Colonic mucosa (tissue), 4 donors: ENCODE measurements at regions of chr10 and their contacts with region 1.

Region 1: DNA sequence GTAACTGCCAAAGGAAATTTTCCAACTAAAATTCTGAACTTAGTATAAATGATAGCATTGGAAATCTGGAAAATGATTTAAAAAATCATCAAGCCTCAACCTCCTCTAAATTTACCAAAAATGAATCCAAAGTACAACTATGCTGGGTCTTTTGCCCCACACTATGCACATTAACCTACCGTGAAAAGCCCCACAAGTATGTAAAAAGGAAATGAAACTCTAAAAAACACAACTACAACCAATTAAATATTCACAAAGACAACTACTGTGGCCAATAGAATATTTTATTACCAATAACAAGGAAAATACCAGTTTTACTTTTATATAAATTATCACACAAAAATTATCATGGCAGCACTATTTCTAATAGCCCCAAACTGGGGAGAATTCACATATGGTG is 19.3 kb downstream of the EIF3A start:
- DNase-seq: no peak
- H3K4me3 ChIP-seq: no peak overlapping the region
- H3K27ac ChIP-seq: no peak overlapping the region
- H3K4me1 ChIP-seq: no peaks in the 10 kb centered on the region
- H3K27me3 ChIP-seq: no peaks in the 10 kb centered on the region
- CTCF ChIP-seq: no peak

Region 2: DNA sequence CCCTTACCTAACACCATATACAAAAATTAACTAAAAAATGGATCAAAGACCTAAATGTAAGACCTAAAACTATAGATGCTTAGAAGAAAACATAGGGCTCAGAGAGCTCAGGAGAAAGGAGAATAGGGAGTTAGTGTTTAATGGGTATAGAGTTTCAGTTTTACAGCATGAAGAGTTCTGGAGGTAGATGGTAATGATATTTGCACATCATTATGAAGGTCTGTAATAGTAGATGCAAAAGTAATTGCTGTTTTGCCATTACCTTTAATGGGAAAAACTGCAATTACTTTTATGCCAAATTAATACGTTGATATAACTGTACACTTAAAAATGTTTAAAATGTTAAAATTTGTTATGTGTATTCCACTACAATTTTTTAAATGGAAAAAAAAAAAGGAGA is 71.0 kb before region 1 on chr10:
- intact Hi-C with region 1: no loop called
- DNase-seq: no peak
- H3K4me3 ChIP-seq: no peak overlapping the region
- H3K27ac ChIP-seq: no peak overlapping the region
- H3K4me1 ChIP-seq: no peaks in the 10 kb centered on the region
- H3K27me3 ChIP-seq: no peaks in the 10 kb centered on the region
- CTCF ChIP-seq: no peak

Region 3: DNA sequence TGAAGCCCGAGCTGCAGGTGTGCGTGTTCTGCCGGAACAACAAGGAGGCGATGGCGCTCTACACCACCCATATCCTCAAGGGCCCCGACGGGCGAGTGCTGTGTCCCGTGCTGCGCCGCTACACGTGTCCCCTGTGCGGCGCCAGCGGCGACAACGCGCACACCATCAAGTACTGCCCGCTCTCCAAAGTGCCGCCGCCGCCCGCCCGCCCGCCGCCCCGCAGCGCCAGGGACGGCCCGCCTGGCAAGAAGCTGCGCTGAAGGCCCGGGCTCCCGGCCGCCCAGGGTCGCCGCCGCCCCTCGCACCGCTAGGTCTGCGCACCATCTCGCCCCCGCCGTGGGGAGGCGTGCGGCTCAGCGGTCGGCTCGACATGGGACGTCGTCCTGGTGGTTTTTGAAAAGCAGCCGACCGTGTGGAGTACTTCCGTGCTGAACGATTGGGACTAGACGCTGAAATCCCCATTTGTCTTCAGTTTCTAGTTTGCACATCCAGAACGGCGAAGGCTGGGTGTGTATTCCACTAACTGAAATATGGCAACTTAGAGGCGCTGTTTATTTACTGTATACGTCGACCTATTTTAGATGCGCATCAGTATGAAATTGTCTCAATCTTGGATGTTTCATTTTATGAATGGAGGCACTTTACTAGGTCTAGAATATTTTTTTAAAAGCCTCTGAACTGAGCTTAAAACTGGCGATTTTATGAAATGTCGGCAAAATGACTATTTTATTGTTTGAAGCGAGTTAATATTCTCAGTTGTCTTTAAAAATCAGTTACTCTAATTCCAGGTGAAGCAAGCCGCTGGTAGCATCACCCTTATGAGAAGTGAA is 30.7 kb before region 1 on chr10:
- intact Hi-C with region 1: loop called (anchors 5 kb)
- DNase-seq: peak; percentile 57
- H3K4me3 ChIP-seq: peak overlapping the region; percentile 26
- H3K27ac ChIP-seq: no peak overlapping the region
- H3K4me1 ChIP-seq: peaks cover 10% of the 10 kb centered on the region
- H3K27me3 ChIP-seq: no peaks in the 10 kb centered on the region
- CTCF ChIP-seq: no peak

Region 4: DNA sequence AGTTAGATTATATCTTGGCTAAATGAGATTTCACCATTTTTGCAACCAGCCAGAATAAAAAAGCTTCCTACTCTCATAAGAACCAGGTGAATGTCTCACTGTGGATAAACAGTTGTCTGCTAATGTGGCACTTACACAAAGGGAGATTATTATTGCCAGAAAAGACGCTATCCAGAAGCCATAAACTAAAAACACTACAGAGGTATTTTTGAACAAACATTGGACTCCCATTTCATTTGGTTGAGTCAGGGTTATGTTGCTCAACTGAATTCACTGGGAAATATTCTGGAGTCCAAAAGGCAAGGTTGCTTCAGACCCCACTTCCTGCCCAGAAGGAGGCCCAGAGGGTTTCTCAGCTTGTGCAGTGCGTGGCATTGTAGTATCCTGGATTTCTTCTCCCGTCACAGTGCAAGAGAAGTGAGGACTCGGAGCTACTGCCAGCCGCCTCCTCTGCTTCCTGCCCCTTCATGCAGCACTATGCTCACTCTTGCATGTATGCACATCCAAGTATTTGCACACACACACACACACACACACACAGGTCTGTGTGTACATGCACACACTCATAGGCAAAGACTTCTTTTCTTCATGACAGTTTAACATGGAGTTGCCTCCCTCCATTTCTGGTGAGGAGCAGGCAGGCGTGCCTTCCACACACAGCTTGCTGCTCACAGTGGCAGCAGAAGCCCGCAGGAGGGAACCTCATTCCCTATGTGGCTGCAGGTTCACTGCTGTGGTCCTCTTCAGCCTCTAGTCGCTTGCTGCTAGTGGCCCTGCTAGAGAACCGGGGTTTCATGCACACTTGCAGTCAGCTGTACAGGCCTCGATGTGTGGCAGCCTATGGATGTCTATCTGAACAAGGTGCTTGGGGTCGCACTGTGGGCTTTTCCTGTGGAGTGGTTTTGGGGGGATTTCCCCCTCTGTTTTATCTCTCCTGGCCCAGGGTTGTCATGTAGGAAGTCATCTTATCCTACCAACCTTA is 52.7 kb after region 1 on chr10:
- intact Hi-C with region 1: loop called (anchors 10 kb)
- DNase-seq: no peak
- H3K4me3 ChIP-seq: no peak overlapping the region
- H3K27ac ChIP-seq: no peak overlapping the region
- H3K4me1 ChIP-seq: no peaks in the 10 kb centered on the region
- H3K27me3 ChIP-seq: no peaks in the 10 kb centered on the region
- CTCF ChIP-seq: no peak

Region 5: DNA sequence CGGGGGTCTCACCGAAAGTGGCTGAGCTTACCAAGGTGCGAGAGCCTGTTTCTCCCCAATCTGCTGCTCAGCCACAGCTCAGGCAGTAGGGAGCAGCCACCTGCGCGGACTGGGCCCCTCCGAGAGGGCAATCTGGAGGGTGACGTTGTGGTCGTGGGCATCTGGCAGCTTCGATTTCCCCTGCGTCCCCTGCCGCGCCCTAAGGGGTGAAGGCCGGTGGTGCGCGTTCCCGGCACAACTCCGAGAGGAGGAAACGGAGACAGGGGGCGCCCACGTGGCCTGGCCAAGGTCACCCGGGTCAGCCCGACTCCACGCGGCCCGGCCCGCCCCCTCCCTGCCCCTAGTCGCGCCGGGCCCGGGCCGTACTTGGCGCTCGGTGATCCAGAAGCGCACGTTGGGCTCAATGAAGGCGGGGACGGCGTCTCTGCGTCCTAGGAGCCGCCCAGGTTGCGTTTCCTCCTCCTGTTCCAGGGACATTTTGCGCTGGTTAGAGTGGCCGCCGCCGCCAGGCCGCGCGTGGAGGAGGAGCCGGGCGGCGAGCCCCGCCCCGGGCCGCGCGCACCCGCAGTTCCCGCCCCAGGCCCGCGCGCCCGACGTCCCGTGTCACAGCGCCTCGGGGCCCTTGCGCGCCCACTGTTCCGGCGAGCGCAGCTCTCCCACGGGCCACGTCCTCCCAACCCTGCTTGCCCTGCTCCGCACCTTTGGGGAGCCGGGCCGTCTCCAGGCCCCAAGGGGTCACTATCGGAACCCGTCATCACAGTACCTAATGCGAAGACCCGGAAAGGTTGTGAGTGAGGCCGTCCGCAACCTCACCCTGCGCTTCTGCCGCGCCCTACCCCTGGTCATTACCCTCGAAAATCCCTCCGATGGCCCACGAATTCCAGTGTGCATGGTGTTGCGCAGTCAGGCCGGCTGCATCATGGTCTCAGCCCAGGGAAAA is 104.1 kb after region 1 on chr10 and contains the start of gene SFXN4:
- intact Hi-C with region 1: loop called (anchors 10 kb)
- DNase-seq: peak; percentile 84
- H3K4me3 ChIP-seq: peak within 1 kb of the TSS; percentile 94
- H3K27ac ChIP-seq: peak within 1 kb of the TSS; percentile 61
- H3K4me1 ChIP-seq: no peaks in the 10 kb centered on the region
- H3K27me3 ChIP-seq: no peaks in the 10 kb centered on the region
- CTCF ChIP-seq: no peak
- total RNA-seq, gene SFXN4: 29.4 to 37.2 TPM